SK-N-SH (cell line): ENCODE measurements at regions of chr10 and their contacts with region 1.

Region 1: GRCh38 chr10:13787015-13787421 is 200.3 kb downstream of the PRPF18 start:
- DNase-seq: no peak
- H3K4me3 ChIP-seq: no peak overlapping the region
- H3K27ac ChIP-seq: peak overlapping the region; percentile 31 to 71; a peak in 3 of 4 replicates
- H3K4me1 ChIP-seq: peaks cover 24 to 34% of the 10 kb centered on the region in 2 experiments; a peak in 3 of 4 replicates
- H3K27me3 ChIP-seq: no peaks in the 10 kb centered on the region
- CTCF ChIP-seq: no peak
- EP300 ChIP-seq: no peak
- RAD21 ChIP-seq: no peak

Region 2: GRCh38 chr10:13701157-13701919 is 85.7 kb before region 1 on chr10:
- CTCF ChIA-PET with region 1: no interaction called
- POLR2A ChIA-PET with region 1: no interaction called
- DNase-seq: no peak
- H3K4me3 ChIP-seq: no peak overlapping the region
- H3K27ac ChIP-seq: peak overlapping the region in 1 of 2 experiments; percentile 40; a peak in 2 of 4 replicates
- H3K4me1 ChIP-seq: peaks cover 2 to 19% of the 10 kb centered on the region in 2 experiments; a peak in 2 of 4 replicates
- H3K27me3 ChIP-seq: no peaks in the 10 kb centered on the region
- CTCF ChIP-seq: no peak
- EP300 ChIP-seq: no peak
- RAD21 ChIP-seq: no peak

Region 3: GRCh38 chr10:13771992-13772391 is 15.0 kb before region 1 on chr10:
- CTCF ChIA-PET with region 1: no interaction called
- POLR2A ChIA-PET with region 1: no interaction called
- DNase-seq: no peak
- H3K4me3 ChIP-seq: no peak overlapping the region
- H3K27ac ChIP-seq: no peak overlapping the region
- H3K4me1 ChIP-seq: peaks cover 0 to 8% of the 10 kb centered on the region in 2 experiments; a peak in 1 of 4 replicates
- H3K27me3 ChIP-seq: no peaks in the 10 kb centered on the region
- CTCF ChIP-seq: no peak
- EP300 ChIP-seq: no peak
- RAD21 ChIP-seq: no peak

Region 4: DNA sequence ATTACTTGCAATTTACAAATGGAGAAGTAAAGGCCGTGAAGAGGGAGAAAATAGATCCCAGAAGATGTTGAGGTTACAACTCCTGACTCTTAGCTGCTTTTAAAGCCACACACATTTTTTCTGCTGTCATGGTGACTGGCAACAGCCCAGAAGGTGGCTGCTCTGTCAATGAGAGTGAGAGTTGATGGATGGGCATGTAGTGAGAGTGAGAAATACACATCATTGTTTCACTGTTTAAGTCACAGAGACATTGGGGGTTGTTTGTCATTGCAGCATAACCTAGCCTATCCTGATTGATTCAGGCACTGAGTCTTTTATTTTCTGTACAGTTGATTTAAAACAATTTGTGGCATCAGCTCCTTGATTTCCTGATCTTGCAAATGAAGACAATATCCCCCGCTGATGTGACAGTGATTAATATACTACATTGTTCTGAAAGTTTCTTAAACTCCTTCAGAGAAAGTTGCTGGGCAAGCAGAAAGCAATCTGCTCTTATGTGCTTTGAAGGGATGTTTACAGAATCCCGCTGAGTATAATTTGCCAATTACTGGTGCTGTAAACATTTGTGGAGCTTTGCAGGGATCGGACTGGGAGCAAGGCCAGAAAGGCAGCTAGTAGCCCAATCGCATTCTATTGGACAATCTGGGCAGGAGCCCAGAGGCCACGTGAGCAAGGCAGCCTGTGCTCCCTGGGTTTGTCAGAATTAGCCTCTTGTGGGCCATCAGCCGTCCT is 29.3 kb after region 1 on chr10:
- CTCF ChIA-PET with region 1: no interaction called
- POLR2A ChIA-PET with region 1: no interaction called
- DNase-seq: no peak
- H3K4me3 ChIP-seq: no peak overlapping the region
- H3K27ac ChIP-seq: peak overlapping the region in 1 of 2 experiments; percentile 86; a peak in 2 of 4 replicates
- H3K4me1 ChIP-seq: peaks cover 0 to 8% of the 10 kb centered on the region in 2 experiments; a peak in 1 of 4 replicates
- H3K27me3 ChIP-seq: no peaks in the 10 kb centered on the region
- CTCF ChIP-seq: no peak
- EP300 ChIP-seq: no peak
- RAD21 ChIP-seq: no peak

Region 5: GRCh38 chr10:14093730-14094484 is 306.9 kb after region 1 on chr10:
- CTCF ChIA-PET with region 1: interaction called, 66 read pairs
- POLR2A ChIA-PET with region 1: no interaction called
- DNase-seq: peak; percentile 52
- H3K4me3 ChIP-seq: no peak overlapping the region
- H3K27ac ChIP-seq: 0 out of 4 replicates have a peak overlapping the region, but pooled peaks of 1 of the 2 experiments have one; percentile 12
- H3K4me1 ChIP-seq: peaks cover 0 to 19% of the 10 kb centered on the region in 2 experiments; a peak in 2 of 4 replicates
- H3K27me3 ChIP-seq: no peaks in the 10 kb centered on the region
- CTCF ChIP-seq: peak; percentile 71
- EP300 ChIP-seq: no peak
- RAD21 ChIP-seq: peak; percentile 91